Right cardiac atrium (tissue), 5 donors: ENCODE measurements at regions of chr18 and their contacts with region 1.

Region 1: GRCh38 chr18:36464126-36464651 is 166.7 kb downstream of the FHOD3 start:
- DNase-seq: no peak
- ATAC-seq: peak; percentile 40 to 61
- H3K4me3 ChIP-seq: no peak overlapping the region
- H3K27ac ChIP-seq: peak overlapping the region; percentile 83
- H3K4me1 ChIP-seq: peaks cover 3% of the 10 kb centered on the region
- H3K27me3 ChIP-seq: no peaks in the 10 kb centered on the region

Region 2: GRCh38 chr18:36296650-36297416 is 167.4 kb before region 1 on chr18:
- intact Hi-C with region 1: loop called in 2 of 4 experiments (anchors 10 kb)
- DNase-seq: peak; percentile 74 to 83 (median 82)
- ATAC-seq: peak; percentile 72 to 79
- H3K4me3 ChIP-seq: peak overlapping the region; percentile 54
- H3K27ac ChIP-seq: peak overlapping the region; percentile 57
- H3K4me1 ChIP-seq: no peaks in the 10 kb centered on the region
- H3K27me3 ChIP-seq: no peaks in the 10 kb centered on the region

Region 3: DNA sequence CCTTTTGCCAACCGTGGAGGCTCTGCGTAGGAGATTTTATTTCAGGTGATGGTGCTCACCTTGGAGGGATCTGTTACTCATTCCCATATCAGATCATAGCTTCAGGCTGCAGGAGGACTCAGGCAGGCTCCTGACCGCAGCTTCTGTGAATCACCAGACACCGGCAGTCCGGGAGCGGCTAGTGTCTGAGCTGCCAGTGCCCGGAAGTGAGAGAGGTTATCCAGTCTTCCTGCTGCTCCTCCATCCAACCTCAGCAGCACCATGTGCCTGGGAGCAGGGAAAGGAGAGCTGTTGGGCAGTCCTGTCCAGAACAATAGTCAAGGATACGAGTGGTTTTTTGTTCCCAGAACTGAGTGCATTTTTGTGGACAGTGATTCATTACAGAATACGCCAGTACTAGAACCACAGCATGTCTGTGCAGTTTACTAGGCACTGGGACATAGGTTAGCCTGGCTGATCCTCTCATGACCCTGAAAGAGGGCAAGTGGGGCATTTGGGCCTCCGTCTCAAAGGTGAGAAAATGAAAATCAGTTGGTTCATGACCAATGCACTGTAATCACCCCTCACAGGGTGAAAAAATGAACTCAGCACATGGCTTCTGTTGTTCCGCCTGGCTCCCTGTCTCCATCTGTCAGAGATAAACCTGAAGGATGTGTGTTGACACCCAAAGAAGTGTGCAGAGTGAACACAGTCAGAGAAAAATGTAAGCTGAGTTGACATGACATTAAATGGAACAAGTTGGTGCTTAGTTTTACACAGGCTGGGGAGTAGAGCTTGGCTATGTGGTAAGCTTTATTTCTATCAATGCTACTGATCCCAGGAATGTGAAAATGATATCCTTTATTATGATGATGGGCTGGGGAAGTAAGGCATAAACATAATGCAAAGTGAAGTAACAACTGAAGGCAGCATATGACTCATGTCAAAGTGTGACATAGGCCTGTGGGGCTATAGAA is 154.5 kb before region 1 on chr18:
- intact Hi-C with region 1: loop called in 1 of 4 experiments (anchors 10 kb)
- DNase-seq: no peak
- ATAC-seq: peak; percentile 37 to 71
- H3K4me3 ChIP-seq: no peak overlapping the region
- H3K27ac ChIP-seq: peak overlapping the region; percentile 38
- H3K4me1 ChIP-seq: peaks cover 17% of the 10 kb centered on the region
- H3K27me3 ChIP-seq: no peaks in the 10 kb centered on the region

Region 4: DNA sequence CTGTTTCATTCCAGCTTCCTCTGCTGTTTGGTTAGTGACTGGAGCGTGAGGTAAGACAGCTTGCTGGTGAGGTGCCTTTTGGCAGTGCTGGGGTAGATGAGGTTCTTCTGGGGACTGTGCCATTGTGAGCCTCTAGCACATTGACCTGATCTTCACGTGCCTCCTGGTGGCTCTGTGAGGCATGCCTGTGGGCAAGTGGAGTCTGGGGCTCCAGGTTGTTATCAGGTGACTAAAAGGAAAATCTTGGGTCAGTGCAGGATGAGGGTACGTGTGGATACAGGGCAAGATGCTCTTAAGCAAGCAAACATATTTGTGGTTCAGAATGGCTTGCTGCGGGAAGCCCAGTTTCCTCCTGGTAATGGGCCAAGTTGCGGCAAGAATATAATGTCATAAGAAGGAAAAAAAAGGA is 91.3 kb before region 1 on chr18:
- intact Hi-C with region 1: loop called in 1 of 4 experiments (anchors 10 kb)
- DNase-seq: no peak
- ATAC-seq: peak; percentile 22
- H3K4me3 ChIP-seq: no peak overlapping the region
- H3K27ac ChIP-seq: peak overlapping the region; percentile 39
- H3K4me1 ChIP-seq: peaks cover 5% of the 10 kb centered on the region
- H3K27me3 ChIP-seq: no peaks in the 10 kb centered on the region

Region 5: DNA sequence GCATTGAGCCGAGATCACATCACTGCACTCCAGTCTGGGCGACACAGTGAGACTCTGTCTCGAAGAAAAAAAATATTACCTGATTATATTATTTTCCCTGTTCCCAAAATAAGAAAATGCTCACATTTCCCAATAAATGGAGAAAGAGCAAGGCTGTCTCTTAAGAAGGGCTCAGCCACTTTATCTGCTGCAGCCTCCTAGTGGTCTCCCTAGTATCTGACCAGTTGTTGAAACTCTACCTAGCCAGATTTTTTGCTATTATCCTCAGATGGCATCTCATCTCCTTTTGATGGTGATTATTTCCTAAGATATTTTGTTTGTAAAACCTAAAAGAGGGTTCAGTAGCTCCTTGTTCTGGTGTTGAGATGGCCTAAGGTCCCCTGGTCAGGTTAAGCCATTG is 250.3 kb after region 1 on chr18:
- intact Hi-C with region 1: no loop called
- DNase-seq: no peak
- ATAC-seq: no peak
- H3K4me3 ChIP-seq: no peak overlapping the region
- H3K27ac ChIP-seq: no peak overlapping the region
- H3K4me1 ChIP-seq: no peaks in the 10 kb centered on the region
- H3K27me3 ChIP-seq: no peaks in the 10 kb centered on the region